ENCODE measurements at regions of chr5 and their contacts with region 1.

Region 1: GRCh38 chr5:151126199-151126645 is 31.4 kb downstream of the ANXA6 start:
- DNase-seq: peak in 4 of 5 donors; percentile 65 to 73 (median 66)
- H3K4me3 ChIP-seq: no peak overlapping the region
- H3K4me3 Mint-ChIP-seq: peak overlapping the region in 4 of 8 donors; percentile 43 to 54 (median 52)
- H3K27ac ChIP-seq: peak overlapping the region; percentile 47
- H3K27ac Mint-ChIP-seq: peak overlapping the region; percentile 78 to 96 (median 91)
- H3K4me1 ChIP-seq: peaks cover 35% of the 10 kb centered on the region
- H3K4me1 Mint-ChIP-seq: peaks cover 30 to 54% (median 43%) of the 10 kb centered on the region in 4 donors
- H3K27me3 ChIP-seq: no peaks in the 10 kb centered on the region
- H3K27me3 Mint-ChIP-seq: no peaks in the 10 kb centered on the region

Region 2: GRCh38 chr5:151107738-151108508 is 18.3 kb before region 1 on chr5:
- CTCF ChIA-PET with region 1: interaction called, 13 read pairs
- POLR2A ChIA-PET with region 1: no interaction called
- intact Hi-C with region 1: no loop called
- DNase-seq: no peak
- H3K4me3 ChIP-seq: no peak overlapping the region
- H3K4me3 Mint-ChIP-seq: no peak overlapping the region
- H3K27ac ChIP-seq: no peak overlapping the region
- H3K27ac Mint-ChIP-seq: peak overlapping the region in 6 of 7 donors; percentile 1 to 61 (median 40)
- H3K4me1 ChIP-seq: no peaks in the 10 kb centered on the region
- H3K4me1 Mint-ChIP-seq: peaks cover 0 to 11% (median 3%) of the 10 kb centered on the region in 4 donors
- H3K27me3 ChIP-seq: no peaks in the 10 kb centered on the region
- H3K27me3 Mint-ChIP-seq: no peaks in the 10 kb centered on the region

Region 3: DNA sequence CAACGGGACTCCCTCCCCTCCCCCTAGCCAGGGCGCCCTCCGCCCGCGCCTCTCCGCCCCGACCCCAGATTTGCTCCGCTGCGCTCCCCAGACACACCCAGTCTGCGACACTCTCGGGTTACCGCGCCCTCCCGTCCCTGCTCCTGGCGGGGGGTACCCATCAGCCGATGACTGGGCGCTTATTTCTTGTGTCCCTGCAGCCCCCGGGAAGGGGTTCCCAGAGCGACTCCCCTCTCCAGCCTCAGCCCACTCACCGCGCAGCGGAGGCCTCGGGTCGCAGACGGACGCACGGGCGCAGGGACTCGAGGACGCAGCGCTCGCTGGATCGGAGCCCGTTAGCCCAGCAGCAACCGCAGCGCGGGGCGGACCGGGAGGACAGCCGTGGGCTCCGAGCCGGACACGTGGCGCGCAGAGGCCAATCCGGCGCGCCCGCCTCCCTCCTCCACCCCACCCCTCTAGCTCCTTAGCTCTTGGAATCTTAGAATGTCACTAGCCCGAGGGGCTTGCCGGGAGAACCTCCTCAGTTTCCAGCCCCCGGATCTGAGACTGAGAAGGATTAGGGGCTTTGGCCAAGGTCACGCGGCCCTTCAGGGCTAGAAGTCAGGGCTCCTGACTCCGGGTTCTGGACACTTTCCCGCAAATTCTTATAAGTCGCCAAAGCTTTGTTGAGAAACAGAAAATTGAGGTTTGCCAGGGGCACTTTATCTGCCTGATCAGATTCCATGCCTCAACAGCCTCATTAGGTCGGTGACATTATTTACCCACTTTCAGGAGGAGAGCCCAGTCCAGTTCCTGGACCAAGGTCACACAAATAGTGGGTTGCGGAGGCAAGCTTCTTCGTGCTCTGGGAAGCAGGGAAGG is 31.4 kb after region 1 on chr5 and contains the start of gene ANXA6:
- CTCF ChIA-PET with region 1: interaction called, 2,066 read pairs
- POLR2A ChIA-PET with region 1: interaction called, 249 read pairs
- intact Hi-C with region 1: loop called (anchors 2 kb)
- DNase-seq: peak; percentile 58 to 71 (median 64)
- H3K4me3 ChIP-seq: peak within 1 kb of the TSS; percentile 80 to 90
- H3K4me3 Mint-ChIP-seq: peak within 1 kb of the TSS; percentile 91 to 99 (median 97)
- H3K27ac ChIP-seq: peak within 1 kb of the TSS; percentile 84
- H3K27ac Mint-ChIP-seq: peak within 1 kb of the TSS; percentile 93 to 99 (median 97)
- H3K4me1 ChIP-seq: peaks cover 55% of the 10 kb centered on the region
- H3K4me1 Mint-ChIP-seq: peaks cover 37 to 73% (median 51%) of the 10 kb centered on the region in 4 donors
- H3K27me3 ChIP-seq: no peaks in the 10 kb centered on the region
- H3K27me3 Mint-ChIP-seq: no peaks in the 10 kb centered on the region
- total RNA-seq, gene ANXA6: 318 to 342 TPM

Region 4: DNA sequence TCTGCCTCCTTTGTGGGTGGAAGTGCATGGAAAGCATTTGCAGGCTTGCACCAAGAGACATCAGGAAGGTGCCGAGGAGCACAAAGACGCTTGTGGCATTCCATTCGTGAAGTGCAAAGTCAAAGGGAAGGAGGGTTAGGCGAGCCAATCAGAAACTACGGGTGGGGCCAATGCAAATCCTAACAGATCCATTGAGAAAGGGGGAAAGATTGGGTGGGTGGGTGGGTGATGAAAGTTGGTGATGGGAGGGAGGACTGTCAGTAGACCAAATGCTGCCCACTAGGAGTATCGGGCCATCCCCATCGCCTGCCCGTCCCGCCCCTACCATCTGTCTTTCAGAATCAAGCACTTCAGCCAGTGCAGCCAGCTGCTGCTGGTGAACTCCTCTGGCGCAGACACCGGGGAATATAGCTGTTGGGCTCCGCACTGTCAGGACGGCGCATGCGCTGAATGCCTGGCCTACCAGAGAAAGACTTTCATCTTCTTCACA is 48.4 kb after region 1 on chr5:
- CTCF ChIA-PET with region 1: interaction called, 2,066 read pairs
- POLR2A ChIA-PET with region 1: interaction called, 4 read pairs
- intact Hi-C with region 1: no loop called
- DNase-seq: no peak
- H3K4me3 ChIP-seq: no peak overlapping the region
- H3K4me3 Mint-ChIP-seq: no peak overlapping the region
- H3K27ac ChIP-seq: no peak overlapping the region
- H3K27ac Mint-ChIP-seq: peak overlapping the region in 1 of 7 donors; percentile 89
- H3K4me1 ChIP-seq: peaks cover 8% of the 10 kb centered on the region
- H3K4me1 Mint-ChIP-seq: peaks cover 17 to 19% (median 18%) of the 10 kb centered on the region in 4 donors
- H3K27me3 ChIP-seq: no peaks in the 10 kb centered on the region
- H3K27me3 Mint-ChIP-seq: no peaks in the 10 kb centered on the region

Region 5: GRCh38 chr5:151239237-151239861 is 113.1 kb after region 1 on chr5:
- CTCF ChIA-PET with region 1: interaction called, 103 read pairs
- POLR2A ChIA-PET with region 1: interaction called, 4 read pairs
- intact Hi-C with region 1: loop called (anchors 1 kb)
- DNase-seq: peak in 4 of 5 donors; percentile 40 to 60 (median 48)
- H3K4me3 ChIP-seq: no peak overlapping the region
- H3K4me3 Mint-ChIP-seq: no peak overlapping the region
- H3K27ac ChIP-seq: no peak overlapping the region
- H3K27ac Mint-ChIP-seq: peak overlapping the region in 3 of 7 donors; percentile 35 to 81 (median 61)
- H3K4me1 ChIP-seq: peaks cover 28% of the 10 kb centered on the region
- H3K4me1 Mint-ChIP-seq: peaks cover 17 to 24% (median 18%) of the 10 kb centered on the region in 4 donors
- H3K27me3 ChIP-seq: no peaks in the 10 kb centered on the region
- H3K27me3 Mint-ChIP-seq: no peaks in the 10 kb centered on the region

Region 6: DNA sequence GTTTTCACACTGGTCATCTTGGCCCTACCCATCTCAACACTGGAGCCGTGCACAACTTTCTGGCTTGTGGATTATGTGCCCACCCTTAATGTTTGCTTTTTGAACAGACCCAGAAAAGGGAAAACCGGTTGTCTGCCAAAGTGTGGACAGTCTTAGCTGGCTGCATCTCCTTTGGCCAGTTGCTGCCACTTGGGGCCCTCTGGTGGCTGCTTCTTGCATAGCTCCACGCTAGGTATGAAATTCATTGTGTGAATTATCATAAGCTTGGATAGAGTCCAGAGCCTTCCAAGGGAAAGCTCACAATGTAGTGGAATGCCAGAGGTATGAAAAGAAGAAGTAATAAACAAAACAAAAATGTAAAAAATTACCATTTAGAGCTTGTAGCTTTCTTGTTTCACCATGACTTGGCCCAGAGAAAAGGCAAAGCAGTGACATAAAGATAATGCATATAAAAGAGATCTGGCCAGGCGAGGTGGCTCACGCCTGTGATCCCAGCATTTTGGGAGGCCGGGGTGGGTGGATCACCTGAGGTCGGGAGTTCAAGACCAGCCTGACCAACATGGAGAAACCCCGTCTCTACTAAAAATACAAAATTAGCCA is 189.9 kb after region 1 on chr5:
- CTCF ChIA-PET with region 1: interaction called, 5 read pairs
- POLR2A ChIA-PET with region 1: no interaction called
- intact Hi-C with region 1: loop called (anchors 10 kb)
- DNase-seq: peak in 4 of 5 donors; percentile 2 to 19 (median 12)
- H3K4me3 ChIP-seq: no peak overlapping the region
- H3K4me3 Mint-ChIP-seq: no peak overlapping the region
- H3K27ac ChIP-seq: no peak overlapping the region
- H3K27ac Mint-ChIP-seq: no peak overlapping the region
- H3K4me1 ChIP-seq: no peaks in the 10 kb centered on the region
- H3K4me1 Mint-ChIP-seq: peaks cover 0 to 4% (median 1%) of the 10 kb centered on the region in 4 donors
- H3K27me3 ChIP-seq: no peaks in the 10 kb centered on the region
- H3K27me3 Mint-ChIP-seq: peaks cover 8 to 11% of the 10 kb centered on the region in 2 donors

Measured in CD4-positive, alpha-beta memory T cell (primary cell).